H1 (cell line): ENCODE measurements at regions of chr14 and their contacts with region 1.

Region 1: DNA sequence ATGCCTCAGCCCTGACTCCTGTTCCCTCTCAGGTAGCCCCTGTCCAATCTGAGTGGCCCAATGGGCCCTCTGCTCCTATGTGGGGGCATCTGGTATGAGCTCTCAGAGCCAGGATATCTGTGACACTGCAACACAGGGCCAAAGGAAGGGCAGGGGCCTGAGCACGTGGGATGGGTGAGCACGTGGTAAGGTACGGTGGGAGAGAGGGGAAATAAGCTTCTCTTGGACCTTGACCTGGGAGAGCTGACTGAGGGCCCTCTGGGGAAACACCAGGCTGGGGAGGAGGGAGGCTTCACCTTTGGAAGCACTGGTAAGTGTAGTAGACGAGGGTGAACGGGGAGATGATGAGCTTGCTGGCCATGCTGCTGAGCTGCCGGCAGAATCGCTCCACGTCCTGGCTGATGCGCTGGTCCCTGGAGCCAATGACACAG is 6.7 kb downstream of the ABCD4 start:
- DNase-seq: no peak
- H3K4me3 ChIP-seq: no peak overlapping the region
- H3K27ac ChIP-seq: no peak overlapping the region
- H3K4me1 ChIP-seq: 0 out of 7 replicates have a peak, but pooled peaks cover 0 to 2% (median 0%) of the 10 kb centered on the region in 4 experiments
- H3K27me3 ChIP-seq: no peaks in the 10 kb centered on the region
- CTCF ChIP-seq: no peak
- EP300 ChIP-seq: no peak
- POLR2A ChIP-seq: no peak
- RAD21 ChIP-seq: no peak

Region 2: DNA sequence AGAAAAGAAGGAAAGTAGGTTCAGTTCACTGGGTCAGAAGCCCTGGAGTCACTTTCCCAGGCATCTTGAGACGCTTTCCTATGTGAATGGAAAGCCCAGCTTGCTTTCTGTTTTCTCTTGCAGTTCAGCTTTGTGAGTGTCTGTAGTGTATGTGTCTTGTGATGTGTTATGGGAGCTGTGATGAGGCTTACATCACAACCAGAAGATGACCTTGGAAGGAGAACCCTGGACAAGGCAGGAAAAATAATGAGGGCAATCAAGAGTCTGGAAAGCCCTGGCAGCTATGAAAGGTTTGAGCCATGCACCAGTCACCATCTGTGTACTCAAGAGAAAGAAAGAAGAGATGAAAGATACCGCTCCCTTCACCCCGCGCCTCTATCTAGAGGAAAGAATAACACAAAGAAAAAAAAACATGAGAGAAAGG is 479.6 kb before region 1 on chr14:
- CTCF ChIA-PET with region 1: no interaction called
- POLR2A ChIA-PET with region 1: no interaction called
- DNase-seq: no peak
- H3K4me3 ChIP-seq: no peak overlapping the region
- H3K27ac ChIP-seq: no peak overlapping the region
- H3K4me1 ChIP-seq: no peaks in the 10 kb centered on the region
- H3K27me3 ChIP-seq: no peaks in the 10 kb centered on the region
- CTCF ChIP-seq: no peak
- EP300 ChIP-seq: no peak
- POLR2A ChIP-seq: no peak
- RAD21 ChIP-seq: no peak

Region 3: DNA sequence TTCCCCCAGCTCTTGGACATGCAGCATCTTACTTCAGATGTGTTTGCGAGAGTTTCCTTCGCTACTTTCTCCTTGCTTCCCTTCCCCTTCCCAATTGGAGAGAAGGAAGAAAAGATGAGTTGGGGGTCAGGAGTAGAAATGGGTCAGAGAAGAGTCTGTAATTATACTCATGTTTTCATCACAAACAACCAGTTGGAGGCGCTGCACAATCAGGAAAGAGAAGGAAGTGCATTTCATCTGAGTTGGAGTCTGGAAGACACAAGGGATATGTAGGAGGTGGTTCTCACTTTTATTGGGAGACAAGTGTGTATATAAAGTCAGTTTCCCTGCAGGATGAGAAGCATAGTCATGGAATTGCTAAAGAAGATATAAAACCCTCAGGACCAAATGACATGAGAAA is 88.1 kb before region 1 on chr14:
- CTCF ChIA-PET with region 1: interaction called, 21 read pairs
- POLR2A ChIA-PET with region 1: no interaction called
- DNase-seq: no peak
- H3K4me3 ChIP-seq: no peak overlapping the region
- H3K27ac ChIP-seq: no peak overlapping the region
- H3K4me1 ChIP-seq: peaks cover 0 to 2% (median 0%) of the 10 kb centered on the region in 4 experiments; a peak in 1 of 7 replicates
- H3K27me3 ChIP-seq: no peaks in the 10 kb centered on the region
- CTCF ChIP-seq: peak in 2 of 3 experiments; percentile 82 to 84; a peak in 3 of 4 replicates
- EP300 ChIP-seq: no peak
- POLR2A ChIP-seq: no peak
- RAD21 ChIP-seq: peak; percentile 87 to 91

Region 4: DNA sequence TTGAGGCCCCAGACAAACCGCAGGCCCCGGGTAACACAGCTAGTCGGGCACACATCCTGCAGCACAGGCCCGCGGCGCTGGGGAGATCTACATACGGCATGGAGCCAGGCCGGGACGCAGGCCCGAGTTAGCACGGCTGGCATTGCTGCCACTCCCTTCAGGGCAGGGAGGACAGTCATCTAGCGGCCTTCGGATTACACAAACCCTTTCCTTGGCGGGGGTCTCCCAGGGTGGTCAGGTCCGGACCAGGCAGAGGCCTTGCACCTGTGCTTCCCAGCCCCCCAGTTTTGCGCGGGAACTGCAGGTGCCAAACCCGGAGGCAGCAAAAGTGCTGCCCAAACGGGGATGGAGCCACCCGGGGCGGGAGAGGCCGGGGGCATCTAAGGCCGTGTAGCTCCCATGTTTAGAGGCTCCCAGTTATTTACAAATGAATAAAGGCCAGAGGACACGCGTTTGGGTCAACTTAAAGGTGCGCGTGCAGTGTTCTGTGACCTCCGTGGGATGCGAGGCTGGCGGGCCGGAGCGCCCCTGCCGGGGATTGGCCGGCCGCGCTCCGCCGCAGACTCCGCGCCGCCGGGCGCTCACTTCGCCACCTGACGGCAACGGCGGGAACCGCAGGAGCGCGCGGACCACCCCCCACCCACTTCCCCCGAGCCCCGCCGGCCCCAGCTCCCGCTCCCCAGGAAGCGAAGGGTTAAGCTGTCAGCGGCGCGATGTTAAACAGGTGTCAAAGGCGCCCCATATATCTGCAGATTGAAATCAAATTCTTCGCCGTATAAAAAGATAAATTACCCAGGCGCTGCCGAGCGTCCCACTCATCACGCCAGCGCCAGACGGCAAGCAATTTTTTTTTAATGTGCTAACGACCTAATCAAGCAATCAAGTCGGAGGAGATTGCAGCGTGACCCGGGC is 38.7 kb before region 1 on chr14:
- CTCF ChIA-PET with region 1: interaction called, 56 read pairs
- POLR2A ChIA-PET with region 1: no interaction called
- DNase-seq: peak in 1 of 2 experiments; percentile 86
- H3K4me3 ChIP-seq: peak overlapping the region; percentile 35 to 87 (median 44)
- H3K27ac ChIP-seq: no peak overlapping the region
- H3K4me1 ChIP-seq: no peaks in the 10 kb centered on the region; a peak in 1 of 7 replicates
- H3K27me3 ChIP-seq: peaks cover 3 to 18% (median 17%) of the 10 kb centered on the region in 4 experiments
- CTCF ChIP-seq: peak; percentile 69 to 98 (median 78)
- EP300 ChIP-seq: 0 out of 3 replicates have a peak, but pooled peaks of 1 of the 2 experiments have one; percentile 22
- POLR2A ChIP-seq: no peak
- RAD21 ChIP-seq: peak; percentile 35 to 50

Region 5: DNA sequence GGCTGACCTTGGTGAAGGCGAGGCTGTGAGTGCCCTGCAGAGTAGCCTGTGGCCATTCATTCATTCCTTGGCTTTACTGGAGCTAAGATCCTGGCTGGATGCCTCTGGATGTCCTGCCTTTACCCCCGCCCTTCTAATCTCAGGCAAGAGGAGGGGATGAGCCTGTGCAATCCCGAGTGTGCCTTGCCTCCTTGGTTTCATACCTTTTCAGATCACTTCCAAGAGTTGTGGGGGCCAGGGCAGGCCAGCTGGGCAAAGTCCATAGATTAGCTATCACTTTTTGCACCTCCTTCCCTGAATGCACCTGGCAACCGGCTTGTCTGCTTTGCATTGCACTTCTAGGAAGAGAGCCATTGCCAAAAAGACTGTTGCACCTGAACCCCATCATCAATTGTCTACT is 53.7 kb after region 1 on chr14:
- CTCF ChIA-PET with region 1: interaction called, 45 read pairs
- POLR2A ChIA-PET with region 1: interaction called, 6 read pairs
- DNase-seq: no peak
- H3K4me3 ChIP-seq: peak overlapping the region; percentile 87 to 98 (median 90)
- H3K27ac ChIP-seq: peak overlapping the region; percentile 92; the same call in 1 of the 2 replicates
- H3K4me1 ChIP-seq: peaks cover 4 to 20% (median 12%) of the 10 kb centered on the region in 4 experiments
- H3K27me3 ChIP-seq: no peaks in the 10 kb centered on the region
- CTCF ChIP-seq: no peak
- EP300 ChIP-seq: no peak
- POLR2A ChIP-seq: no peak
- RAD21 ChIP-seq: no peak

Region 6: GRCh38 chr14:74414403-74415114 is 118.5 kb after region 1 on chr14:
- CTCF ChIA-PET with region 1: interaction called, 11 read pairs
- POLR2A ChIA-PET with region 1: no interaction called
- DNase-seq: no peak
- H3K4me3 ChIP-seq: peak overlapping the region in 1 of 4 experiments; percentile 5; a peak in 1 of 8 replicates
- H3K27ac ChIP-seq: no peak overlapping the region
- H3K4me1 ChIP-seq: peaks cover 11 to 31% (median 19%) of the 10 kb centered on the region in 4 experiments
- H3K27me3 ChIP-seq: no peaks in the 10 kb centered on the region
- CTCF ChIP-seq: no peak
- EP300 ChIP-seq: no peak
- POLR2A ChIP-seq: no peak
- RAD21 ChIP-seq: no peak

Region 7: GRCh38 chr14:74645244-74645643 is 349.2 kb after region 1 on chr14:
- CTCF ChIA-PET with region 1: no interaction called
- POLR2A ChIA-PET with region 1: no interaction called
- DNase-seq: no peak
- H3K4me3 ChIP-seq: no peak overlapping the region
- H3K27ac ChIP-seq: no peak overlapping the region
- H3K4me1 ChIP-seq: peaks cover 0 to 11% (median 4%) of the 10 kb centered on the region in 4 experiments; a peak in 5 of 7 replicates
- H3K27me3 ChIP-seq: no peaks in the 10 kb centered on the region
- CTCF ChIP-seq: no peak
- EP300 ChIP-seq: no peak
- POLR2A ChIP-seq: no peak
- RAD21 ChIP-seq: no peak